ENCODE measurements at regions of chr19 and their contacts with region 1.

Region 1: GRCh38 chr19:56121180-56122167 is at the start of gene ZNF787:
- DNase-seq: peak; percentile 96
- ATAC-seq: peak; percentile 82
- H3K4me3 ChIP-seq: peak within 1 kb of the TSS; percentile 80 to 91
- H3K27ac ChIP-seq: peak within 1 kb of the TSS; percentile 96
- H3K4me1 ChIP-seq: peaks cover 9 to 22% of the 10 kb centered on the region in 2 experiments
- H3K27me3 ChIP-seq: no peaks in the 10 kb centered on the region
- CTCF ChIP-seq: no peak
- POLR2A ChIP-seq: no peak
- RAD21 ChIP-seq: no peak
- total RNA-seq, gene ZNF787: 40.3 TPM

Region 2: GRCh38 chr19:56140583-56141416 is 19.3 kb after region 1 on chr19 and contains the start of gene ZNF444:
- CTCF ChIA-PET with region 1: no interaction called
- POLR2A ChIA-PET with region 1: interaction called, 6 read pairs
- RAD21 ChIA-PET with region 1: interaction called in 1 of 2 experiments, 6 read pairs
- intact Hi-C with region 1: loop called (anchors 1 kb)
- DNase-seq: peak; percentile 96
- ATAC-seq: peak; percentile 95
- H3K4me3 ChIP-seq: peak within 1 kb of the TSS; percentile 71 to 72
- H3K27ac ChIP-seq: peak within 1 kb of the TSS; percentile 52
- H3K4me1 ChIP-seq: peaks cover 6 to 12% of the 10 kb centered on the region in 2 experiments
- H3K27me3 ChIP-seq: no peaks in the 10 kb centered on the region
- CTCF ChIP-seq: no peak
- POLR2A ChIP-seq: no peak
- RAD21 ChIP-seq: no peak
- total RNA-seq, gene ZNF444: 31.7 TPM

Measured in HCT116 (cell line).